ENCODE measurements at regions of chr14 and their contacts with region 1.

Region 1: DNA sequence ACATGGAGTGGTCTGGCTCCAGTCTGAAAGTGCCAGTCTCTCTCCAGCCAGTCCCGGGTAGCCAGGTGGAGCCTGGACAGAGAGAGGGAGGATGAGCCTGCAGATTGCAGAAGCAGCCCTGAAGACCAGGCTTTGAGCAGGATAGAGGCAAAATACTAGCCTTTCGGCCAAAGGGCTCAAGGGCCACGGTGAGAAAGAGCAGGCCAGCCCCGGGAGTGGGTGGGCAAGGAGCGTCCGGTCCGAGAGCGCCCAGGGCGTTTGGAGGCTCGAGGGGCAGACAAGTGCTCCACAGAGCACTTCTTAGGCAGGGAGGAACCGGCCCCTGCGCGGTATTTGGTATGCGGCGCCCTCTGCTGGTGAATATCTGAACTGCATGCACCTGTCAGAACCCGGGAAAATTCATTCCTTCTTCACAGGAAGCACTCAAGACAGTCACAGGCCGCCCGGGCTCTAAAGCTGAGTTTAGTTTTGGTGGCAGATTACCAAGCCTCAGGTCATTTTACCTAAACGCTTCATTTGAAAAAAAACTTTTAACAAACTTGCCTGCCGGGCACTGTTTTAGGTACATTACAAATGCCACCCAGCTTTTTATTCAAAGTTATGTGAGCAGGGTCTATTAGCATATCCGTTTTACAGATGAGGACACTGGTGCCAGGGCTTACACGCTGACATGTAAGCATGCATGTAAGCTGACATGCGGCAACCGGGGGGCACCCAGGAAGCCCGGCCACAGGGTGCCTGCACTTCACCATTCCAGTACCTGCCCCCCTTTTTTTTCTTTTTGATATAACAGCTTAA is 21.0 kb upstream of the PSMC1 start:
- DNase-seq: peak; percentile 35
- ATAC-seq: peak; percentile 98
- H3K4me3 ChIP-seq: no peak overlapping the region
- H3K27ac ChIP-seq: no peak overlapping the region
- H3K4me1 ChIP-seq: no peaks in the 10 kb centered on the region
- H3K27me3 ChIP-seq: no peaks in the 10 kb centered on the region; the same call in none of the 2 replicates
- CTCF ChIP-seq: peak; percentile 87
- POLR2A ChIP-seq: no peak
- RAD21 ChIP-seq: peak; percentile 84

Region 2: GRCh38 chr14:89027097-89027740 is 1208.2 kb before region 1 on chr14:
- CTCF ChIA-PET with region 1: no interaction called
- POLR2A ChIA-PET with region 1: no interaction called
- dilution Hi-C with region 1: no loop called
- in situ Hi-C with region 1: no loop called
- intact Hi-C with region 1: loop called (anchors 1 kb)
- DNase-seq: peak; percentile 33
- ATAC-seq: peak; percentile 95
- H3K4me3 ChIP-seq: peak overlapping the region; percentile 68
- H3K27ac ChIP-seq: peak overlapping the region; percentile 50
- H3K4me1 ChIP-seq: peaks cover 3% of the 10 kb centered on the region
- H3K27me3 ChIP-seq: no peaks in the 10 kb centered on the region; the same call in 1 of the 2 replicates
- CTCF ChIP-seq: peak; percentile 79
- POLR2A ChIP-seq: no peak
- RAD21 ChIP-seq: peak; percentile 84

Region 3: DNA sequence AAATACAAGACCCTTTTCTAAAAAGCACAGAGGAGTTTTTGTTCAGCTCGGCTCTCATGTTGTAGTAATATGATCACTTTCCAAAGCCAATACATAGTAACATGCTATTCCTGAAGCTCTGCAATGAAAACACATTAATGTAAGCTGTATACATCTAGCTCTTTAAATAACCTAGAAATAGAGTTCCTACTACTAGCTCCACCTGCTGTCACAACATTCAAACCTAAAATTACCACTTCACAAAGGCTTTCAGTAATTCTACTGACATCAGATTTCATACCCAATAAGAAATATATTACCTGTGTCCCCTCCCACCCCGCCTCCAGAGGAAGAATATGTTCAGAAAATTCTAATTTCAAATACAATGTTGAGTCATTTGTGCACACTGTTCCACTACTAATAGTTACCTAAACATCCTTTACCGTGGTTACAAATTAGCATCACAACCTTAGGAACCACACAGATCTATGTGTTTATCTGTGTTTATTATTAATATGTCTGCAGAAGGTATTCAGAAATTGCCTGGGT is 298.7 kb before region 1 on chr14:
- CTCF ChIA-PET with region 1: no interaction called
- POLR2A ChIA-PET with region 1: no interaction called
- dilution Hi-C with region 1: no loop called
- in situ Hi-C with region 1: no loop called
- intact Hi-C with region 1: loop called (anchors 1 kb)
- DNase-seq: no peak
- ATAC-seq: peak; percentile 40; the same call in 1 of the 2 replicates
- H3K4me3 ChIP-seq: no peak overlapping the region
- H3K27ac ChIP-seq: no peak overlapping the region
- H3K4me1 ChIP-seq: no peaks in the 10 kb centered on the region
- H3K27me3 ChIP-seq: no peaks in the 10 kb centered on the region
- CTCF ChIP-seq: peak; percentile 35
- POLR2A ChIP-seq: no peak
- RAD21 ChIP-seq: peak; percentile 31; the same call in 1 of the 2 replicates

Region 4: GRCh38 chr14:89973234-89973823 is 262.0 kb before region 1 on chr14:
- CTCF ChIA-PET with region 1: interaction called, 14 read pairs
- POLR2A ChIA-PET with region 1: no interaction called
- dilution Hi-C with region 1: no loop called
- in situ Hi-C with region 1: no loop called
- intact Hi-C with region 1: loop called (anchors 1 kb)
- DNase-seq: peak; percentile 69
- ATAC-seq: peak; percentile 94
- H3K4me3 ChIP-seq: no peak overlapping the region
- H3K27ac ChIP-seq: no peak overlapping the region
- H3K4me1 ChIP-seq: no peaks in the 10 kb centered on the region
- H3K27me3 ChIP-seq: no peaks in the 10 kb centered on the region
- CTCF ChIP-seq: peak; percentile 73
- POLR2A ChIP-seq: no peak
- RAD21 ChIP-seq: peak; percentile 70

Region 5: DNA sequence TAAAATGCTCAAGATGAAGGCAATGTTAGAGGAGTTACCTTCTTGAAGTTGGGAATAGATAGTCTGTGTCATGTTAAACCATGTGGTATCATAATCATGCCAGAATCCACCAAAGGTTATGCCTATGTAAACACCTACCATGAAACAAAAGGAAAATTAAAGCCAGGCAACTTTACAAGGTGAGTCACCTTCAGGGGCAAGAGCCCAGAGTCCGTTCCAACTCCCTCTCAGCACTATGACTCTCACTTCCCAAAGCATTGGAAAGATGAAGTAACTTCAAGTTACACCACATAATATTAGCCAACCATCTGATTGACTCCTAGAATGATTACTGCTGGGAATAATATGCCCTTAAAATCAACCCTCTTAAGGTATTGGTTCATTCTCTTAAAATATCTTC is 1458.0 kb after region 1 on chr14:
- CTCF ChIA-PET with region 1: no interaction called
- POLR2A ChIA-PET with region 1: no interaction called
- dilution Hi-C with region 1: no loop called
- in situ Hi-C with region 1: no loop called
- intact Hi-C with region 1: no loop called
- DNase-seq: no peak
- ATAC-seq: no peak
- H3K4me3 ChIP-seq: no peak overlapping the region
- H3K27ac ChIP-seq: no peak overlapping the region
- H3K4me1 ChIP-seq: no peaks in the 10 kb centered on the region
- H3K27me3 ChIP-seq: no peaks in the 10 kb centered on the region
- CTCF ChIP-seq: no peak
- POLR2A ChIP-seq: no peak
- RAD21 ChIP-seq: no peak